B cell (primary cell): ENCODE measurements at regions of chr10 and their contacts with region 1.

Region 1: DNA sequence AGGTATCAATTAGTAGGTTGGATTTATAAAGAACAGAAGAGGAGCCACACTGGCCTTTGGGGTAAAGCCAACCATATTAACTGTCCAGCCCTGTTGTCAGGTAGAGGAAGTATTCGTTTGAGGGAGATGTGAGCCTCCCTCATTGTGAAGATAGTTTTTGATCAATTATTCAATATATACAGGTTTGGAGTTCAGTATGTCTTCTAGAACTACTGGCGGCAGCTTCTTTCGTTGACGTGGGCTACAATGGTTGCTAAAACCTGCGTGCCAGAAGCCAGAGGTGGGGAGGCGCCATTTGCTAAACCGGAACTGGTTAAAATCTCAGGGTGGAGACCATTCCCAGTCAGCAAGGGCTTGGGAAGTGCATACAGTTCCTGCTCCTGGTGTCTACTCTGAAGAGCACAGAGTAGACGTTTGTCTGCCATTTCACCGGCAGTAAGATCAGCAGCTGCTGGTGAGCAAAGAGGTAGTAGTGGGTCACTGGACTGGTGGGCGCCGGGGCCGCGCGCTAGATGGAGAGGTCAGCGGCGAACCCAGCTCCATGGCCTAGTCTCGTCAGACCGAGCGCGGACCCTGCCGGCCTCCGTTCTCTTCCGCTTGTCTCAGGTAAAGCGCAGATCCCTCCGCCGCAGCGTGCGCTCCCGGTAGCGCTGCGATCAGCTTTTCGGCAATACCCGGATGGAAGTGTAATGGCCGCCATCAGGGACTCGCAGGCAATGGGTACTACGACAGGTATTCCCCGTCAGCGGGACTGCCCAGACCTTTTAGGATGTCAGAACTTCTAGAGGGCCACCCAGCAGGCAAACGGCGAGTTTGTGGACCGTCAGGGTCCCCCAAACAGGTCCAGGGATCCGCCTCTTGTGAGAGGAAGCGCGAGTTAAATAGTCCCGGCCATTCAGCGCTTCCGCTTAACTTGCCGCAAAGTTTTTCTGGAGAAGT is at the start of gene ZNF518A:
- DNase-seq: peak; percentile 99
- ATAC-seq: peak; percentile 83
- H3K4me3 ChIP-seq: peak within 1 kb of the TSS; percentile 83 to 96 (median 89)
- H3K4me3 Mint-ChIP-seq: peak within 1 kb of the TSS; percentile 96
- H3K27ac ChIP-seq: peak within 1 kb of the TSS; percentile 98 to 99
- H3K27ac Mint-ChIP-seq: peak within 1 kb of the TSS; percentile 100
- H3K4me1 ChIP-seq: peaks cover 12 to 14% of the 10 kb centered on the region in 2 donors
- H3K4me1 Mint-ChIP-seq: peaks cover 20% of the 10 kb centered on the region
- H3K27me3 ChIP-seq: peaks cover 0 to 33% (median 9%) of the 10 kb centered on the region in 4 experiments
- H3K27me3 Mint-ChIP-seq: peaks cover 36% of the 10 kb centered on the region
- CTCF ChIP-seq: no peak
- total RNA-seq, gene ZNF518A: 33.5 and 34.8 TPM in 2 replicates

Region 2: GRCh38 chr10:95561182-95562075 is 568.2 kb before region 1 on chr10 and contains the start of gene SORBS1:
- CTCF ChIA-PET with region 1: no interaction called
- POLR2A ChIA-PET with region 1: no interaction called
- intact Hi-C with region 1: loop called (anchors 2 kb)
- DNase-seq: peak; percentile 90
- ATAC-seq: peak; percentile 98
- H3K4me3 ChIP-seq: peak within 1 kb of the TSS; percentile 72 to 92 (median 86)
- H3K4me3 Mint-ChIP-seq: peak within 1 kb of the TSS; percentile 100
- H3K27ac ChIP-seq: peak within 1 kb of the TSS in 1 of 2 donors; percentile 44
- H3K27ac Mint-ChIP-seq: peak within 1 kb of the TSS; percentile 81
- H3K4me1 ChIP-seq: peaks cover 8 to 11% of the 10 kb centered on the region in 2 donors
- H3K4me1 Mint-ChIP-seq: peaks cover 16% of the 10 kb centered on the region
- H3K27me3 ChIP-seq: peaks cover 0 to 13% (median 0%) of the 10 kb centered on the region in 4 experiments
- H3K27me3 Mint-ChIP-seq: peaks cover 25% of the 10 kb centered on the region
- CTCF ChIP-seq: no peak
- total RNA-seq, gene SORBS1: 0.44 and 1.5 TPM in 2 replicates

Region 3: GRCh38 chr10:96043033-96043932 is 86.4 kb before region 1 on chr10 and contains the start of gene CCNJ:
- CTCF ChIA-PET with region 1: no interaction called
- POLR2A ChIA-PET with region 1: interaction called, 8 read pairs
- intact Hi-C with region 1: loop called (anchors 1 kb)
- DNase-seq: peak; percentile 91
- ATAC-seq: peak; percentile 85
- H3K4me3 ChIP-seq: peak within 1 kb of the TSS; percentile 56 to 83 (median 73)
- H3K4me3 Mint-ChIP-seq: peak within 1 kb of the TSS; percentile 96
- H3K27ac ChIP-seq: peak within 1 kb of the TSS; percentile 54 to 84
- H3K27ac Mint-ChIP-seq: peak within 1 kb of the TSS; percentile 88
- H3K4me1 ChIP-seq: peaks cover 11 to 14% of the 10 kb centered on the region in 2 donors
- H3K4me1 Mint-ChIP-seq: peaks cover 37% of the 10 kb centered on the region
- H3K27me3 ChIP-seq: peaks cover 0 to 5% (median 0%) of the 10 kb centered on the region in 4 experiments
- H3K27me3 Mint-ChIP-seq: no peaks in the 10 kb centered on the region
- CTCF ChIP-seq: peak; percentile 3
- total RNA-seq, gene CCNJ: 8.9 and 9.1 TPM in 2 replicates

Region 4: GRCh38 chr10:96089670-96090462 is 39.8 kb before region 1 on chr10:
- CTCF ChIA-PET with region 1: interaction called, 31 read pairs
- POLR2A ChIA-PET with region 1: interaction called, 93 read pairs
- intact Hi-C with region 1: loop called (anchors 1 kb)
- DNase-seq: peak; percentile 98
- ATAC-seq: peak; percentile 88
- H3K4me3 ChIP-seq: peak overlapping the region; percentile 67 to 97 (median 96)
- H3K4me3 Mint-ChIP-seq: peak overlapping the region; percentile 98
- H3K27ac ChIP-seq: peak overlapping the region; percentile 89 to 96
- H3K27ac Mint-ChIP-seq: peak overlapping the region; percentile 99
- H3K4me1 ChIP-seq: peaks cover 6 to 9% of the 10 kb centered on the region in 2 donors
- H3K4me1 Mint-ChIP-seq: peaks cover 10% of the 10 kb centered on the region
- H3K27me3 ChIP-seq: peaks cover 0 to 31% (median 20%) of the 10 kb centered on the region in 4 experiments
- H3K27me3 Mint-ChIP-seq: peaks cover 33% of the 10 kb centered on the region
- CTCF ChIP-seq: no peak

Region 5: DNA sequence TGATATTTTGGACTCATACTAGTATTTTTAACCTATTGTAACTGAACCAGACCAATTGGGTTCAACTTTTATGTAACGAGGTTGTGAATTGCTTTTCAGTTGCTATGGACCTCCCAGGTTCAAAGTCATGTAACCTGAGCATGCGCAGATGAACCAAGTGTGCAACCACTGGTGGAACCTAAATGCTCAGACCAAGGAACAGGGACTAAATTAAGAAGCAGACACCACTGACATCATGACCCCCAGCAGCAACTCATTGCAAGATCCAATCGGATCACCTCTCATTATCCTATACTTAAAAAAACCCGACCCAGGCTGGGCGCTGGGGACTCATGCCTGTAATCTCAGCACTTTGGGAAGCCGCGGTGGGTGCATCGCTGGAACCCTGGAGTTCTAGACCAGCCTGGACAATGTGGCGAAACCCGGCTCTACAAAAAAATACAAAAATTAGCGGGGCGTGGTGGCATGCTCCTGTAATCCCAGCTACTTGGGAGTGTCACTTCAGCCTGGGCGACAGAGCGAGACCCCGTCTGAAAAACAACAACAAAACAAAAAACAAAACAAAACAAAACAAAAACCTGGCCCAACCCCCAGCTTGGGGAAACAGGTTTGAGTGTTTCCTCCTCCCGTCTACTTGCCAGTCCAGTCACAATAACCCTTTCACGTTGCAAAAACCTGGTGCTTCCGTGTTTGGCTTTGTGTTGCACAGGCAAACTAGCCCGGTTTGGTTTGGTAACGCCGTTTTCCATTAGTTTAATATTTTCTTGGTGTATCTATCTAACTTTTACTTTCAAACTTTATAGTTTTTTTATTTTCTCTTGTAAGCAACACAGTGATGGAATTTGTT is 10.8 kb before region 1 on chr10:
- CTCF ChIA-PET with region 1: no interaction called
- POLR2A ChIA-PET with region 1: no interaction called
- intact Hi-C with region 1: loop called (anchors 1 kb)
- DNase-seq: no peak
- ATAC-seq: no peak
- H3K4me3 ChIP-seq: no peak overlapping the region
- H3K4me3 Mint-ChIP-seq: no peak overlapping the region
- H3K27ac ChIP-seq: no peak overlapping the region
- H3K27ac Mint-ChIP-seq: no peak overlapping the region
- H3K4me1 ChIP-seq: no peaks in the 10 kb centered on the region
- H3K4me1 Mint-ChIP-seq: no peaks in the 10 kb centered on the region
- H3K27me3 ChIP-seq: peaks cover 1 to 38% (median 11%) of the 10 kb centered on the region in 4 experiments
- H3K27me3 Mint-ChIP-seq: peaks cover 63% of the 10 kb centered on the region
- CTCF ChIP-seq: no peak

Region 6: DNA sequence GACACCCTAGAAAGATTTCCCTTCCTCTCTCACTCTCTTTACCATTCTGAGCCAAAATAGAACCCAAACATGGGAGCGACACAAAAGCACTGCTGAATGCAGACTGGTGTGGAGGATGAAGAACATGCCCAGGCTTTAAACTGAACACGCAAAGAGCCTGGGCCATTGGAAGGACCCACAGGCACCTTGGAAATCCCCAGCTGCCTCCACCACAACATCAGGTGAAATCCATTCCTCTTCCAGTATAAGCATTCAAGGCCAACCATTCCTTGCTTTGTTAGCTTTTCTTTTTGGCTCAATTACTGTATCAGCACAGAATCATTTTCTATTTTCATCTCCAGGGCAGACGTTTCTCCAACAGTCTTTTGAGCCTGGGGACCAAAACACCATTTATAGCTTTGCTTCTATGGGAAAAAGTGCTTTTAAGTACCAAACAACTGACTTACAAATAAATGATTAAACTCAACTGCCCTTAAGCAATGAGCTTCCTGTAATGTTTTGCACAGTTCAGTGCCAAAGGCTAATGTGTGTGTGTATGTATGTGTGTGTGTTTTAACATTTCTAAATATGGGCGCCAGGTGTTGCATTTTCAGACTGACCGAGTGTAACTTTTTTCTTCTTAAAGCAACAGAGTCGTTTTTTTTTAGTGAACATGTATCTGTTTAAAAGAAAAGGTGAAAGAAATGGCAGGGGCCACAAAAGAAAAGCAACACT is 157.9 kb after region 1 on chr10:
- CTCF ChIA-PET with region 1: interaction called, 7 read pairs
- POLR2A ChIA-PET with region 1: interaction called, 3 read pairs
- intact Hi-C with region 1: loop called (anchors 1 kb)
- DNase-seq: peak; percentile 83
- ATAC-seq: peak; percentile 76
- H3K4me3 ChIP-seq: peak overlapping the region; percentile 42 to 77 (median 67)
- H3K4me3 Mint-ChIP-seq: peak overlapping the region; percentile 84
- H3K27ac ChIP-seq: peak overlapping the region; percentile 86
- H3K27ac Mint-ChIP-seq: peak overlapping the region; percentile 92
- H3K4me1 ChIP-seq: peaks cover 63 to 64% of the 10 kb centered on the region in 2 donors
- H3K4me1 Mint-ChIP-seq: peaks cover 76% of the 10 kb centered on the region
- H3K27me3 ChIP-seq: no peaks in the 10 kb centered on the region
- H3K27me3 Mint-ChIP-seq: no peaks in the 10 kb centered on the region
- CTCF ChIP-seq: no peak